CD8-positive, alpha-beta T cell (primary cell): ENCODE measurements at regions of chr16 and their contacts with region 1.

Region 1: GRCh38 chr16:89815639-89816348 is 653 bp downstream of the FANCA start:
- DNase-seq: peak in 1 of 9 experiments; percentile 19
- ATAC-seq: peak; percentile 12
- H3K4me3 ChIP-seq: peak overlapping the region in 1 of 2 experiments; percentile 34
- H3K4me3 Mint-ChIP-seq: peak overlapping the region; percentile 80
- H3K27ac ChIP-seq: no peak overlapping the region
- H3K27ac Mint-ChIP-seq: no peak overlapping the region
- H3K4me1 ChIP-seq: peaks cover 13% of the 10 kb centered on the region
- H3K4me1 Mint-ChIP-seq: peaks cover 10% of the 10 kb centered on the region
- H3K27me3 ChIP-seq: peaks cover 0 to 7% of the 10 kb centered on the region in 2 experiments
- H3K27me3 Mint-ChIP-seq: no peaks in the 10 kb centered on the region
- CTCF ChIP-seq: no peak

Region 2: DNA sequence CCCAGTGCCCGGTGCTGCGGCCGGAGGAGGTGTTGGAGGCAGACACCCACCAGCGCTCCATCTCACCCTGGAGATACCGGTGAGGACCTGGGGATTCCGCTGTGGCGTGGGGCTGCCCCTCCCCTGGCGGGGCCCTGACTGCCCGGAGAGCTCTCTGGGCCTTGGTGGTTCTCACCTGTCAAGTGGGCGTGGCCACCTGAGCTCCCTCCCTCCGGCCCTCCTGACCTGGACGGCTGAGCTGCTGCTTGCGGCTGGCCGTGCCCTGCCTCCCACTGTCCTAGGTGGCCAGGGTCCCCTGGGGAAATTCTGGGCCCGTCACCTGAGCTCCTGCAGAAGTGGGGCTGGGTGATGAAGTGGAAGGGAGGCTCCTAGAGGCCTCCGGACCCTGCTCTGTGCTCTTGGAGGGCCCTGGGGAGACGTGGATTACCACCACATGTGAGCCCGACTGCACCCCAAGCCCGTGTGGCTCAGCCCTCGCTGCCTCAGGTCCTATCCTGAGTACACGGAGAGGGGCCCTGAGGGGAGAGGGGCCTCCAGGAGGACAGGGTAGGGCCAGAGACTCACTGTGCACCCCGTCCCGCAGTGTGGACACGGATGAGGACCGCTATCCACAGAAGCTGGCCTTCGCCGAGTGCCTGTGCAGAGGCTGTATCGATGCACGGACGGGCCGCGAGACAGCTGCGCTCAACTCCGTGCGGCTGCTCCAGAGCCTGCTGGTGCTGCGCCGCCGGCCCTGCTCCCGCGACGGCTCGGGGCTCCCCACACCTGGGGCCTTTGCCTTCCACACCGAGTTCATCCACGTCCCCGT is 1176.4 kb before region 1 on chr16:
- CTCF ChIA-PET with region 1: no interaction called
- POLR2A ChIA-PET with region 1: no interaction called
- intact Hi-C with region 1: no loop called
- DNase-seq: peak in 2 of 9 experiments; percentile 44
- ATAC-seq: no peak
- H3K4me3 ChIP-seq: no peak overlapping the region
- H3K4me3 Mint-ChIP-seq: no peak overlapping the region
- H3K27ac ChIP-seq: no peak overlapping the region
- H3K27ac Mint-ChIP-seq: no peak overlapping the region
- H3K4me1 ChIP-seq: peaks cover 47% of the 10 kb centered on the region
- H3K4me1 Mint-ChIP-seq: peaks cover 41% of the 10 kb centered on the region
- H3K27me3 ChIP-seq: peaks cover 0 to 11% of the 10 kb centered on the region in 2 experiments
- H3K27me3 Mint-ChIP-seq: peaks cover 5% of the 10 kb centered on the region
- CTCF ChIP-seq: no peak

Region 3: DNA sequence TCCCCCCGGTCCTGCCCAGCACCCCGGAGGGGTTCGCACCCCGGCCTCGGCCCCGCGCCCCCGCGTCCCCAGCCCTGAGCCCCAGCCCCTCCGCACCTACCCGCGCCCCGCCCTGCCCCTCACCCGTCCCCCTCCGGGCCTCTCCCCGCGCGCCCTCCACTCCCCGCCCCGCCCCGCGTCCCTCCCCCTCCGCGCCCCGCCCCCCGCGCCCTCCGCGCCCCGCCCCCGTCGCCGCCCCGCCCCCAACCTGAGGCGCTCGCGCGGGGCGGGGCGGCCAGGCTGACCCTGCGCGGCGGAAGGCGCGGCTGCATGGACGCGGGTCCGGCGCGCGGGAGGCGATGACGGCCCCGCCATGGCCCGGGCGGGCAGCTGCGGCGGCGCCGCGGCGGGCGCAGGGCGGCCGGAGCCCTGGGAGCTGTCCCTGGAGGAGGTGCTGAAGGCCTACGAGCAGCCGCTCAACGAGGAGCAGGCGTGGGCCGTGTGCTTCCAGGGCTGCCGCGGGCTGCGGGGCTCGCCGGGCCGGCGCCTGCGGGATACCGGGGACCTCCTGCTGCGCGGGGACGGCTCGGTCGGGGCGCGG is 12.5 kb after region 1 on chr16 and contains the start of gene SPIRE2:
- CTCF ChIA-PET with region 1: no interaction called
- POLR2A ChIA-PET with region 1: no interaction called
- intact Hi-C with region 1: loop called (anchors 1 kb)
- DNase-seq: peak; percentile 48 to 88 (median 72)
- ATAC-seq: peak; percentile 97
- H3K4me3 ChIP-seq: no peak within 1 kb of the TSS
- H3K4me3 Mint-ChIP-seq: peak within 1 kb of the TSS; percentile 61
- H3K27ac ChIP-seq: no peak within 1 kb of the TSS
- H3K27ac Mint-ChIP-seq: no peak within 1 kb of the TSS
- H3K4me1 ChIP-seq: peaks cover 11% of the 10 kb centered on the region
- H3K4me1 Mint-ChIP-seq: peaks cover 8% of the 10 kb centered on the region
- H3K27me3 ChIP-seq: peaks cover 4 to 14% of the 10 kb centered on the region in 2 experiments
- H3K27me3 Mint-ChIP-seq: peaks cover 23% of the 10 kb centered on the region
- CTCF ChIP-seq: no peak
- total RNA-seq, gene SPIRE2: 0.76 TPM in 1 of 2 experiments, not detected in the other

Region 4: DNA sequence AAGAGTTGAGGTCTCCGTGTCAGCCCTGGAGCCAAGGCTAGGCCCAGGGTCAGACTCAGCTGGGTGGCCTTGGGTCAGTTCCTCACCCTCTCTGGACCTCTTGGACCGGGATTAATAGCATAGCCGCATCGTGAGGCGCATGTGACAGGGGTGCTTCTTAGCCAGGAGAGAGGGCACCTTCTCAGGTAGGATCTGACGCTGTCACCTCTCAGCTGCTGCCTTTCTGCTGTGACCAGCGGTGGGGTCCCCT is 21.4 kb after region 1 on chr16:
- CTCF ChIA-PET with region 1: no interaction called
- POLR2A ChIA-PET with region 1: interaction called, 4 read pairs
- intact Hi-C with region 1: loop called in 1 of 2 experiments (anchors 2 kb)
- DNase-seq: no peak
- ATAC-seq: no peak
- H3K4me3 ChIP-seq: peak overlapping the region; percentile 21 to 28
- H3K4me3 Mint-ChIP-seq: peak overlapping the region; percentile 68
- H3K27ac ChIP-seq: no peak overlapping the region
- H3K27ac Mint-ChIP-seq: no peak overlapping the region
- H3K4me1 ChIP-seq: peaks cover 30% of the 10 kb centered on the region
- H3K4me1 Mint-ChIP-seq: peaks cover 26% of the 10 kb centered on the region
- H3K27me3 ChIP-seq: no peaks in the 10 kb centered on the region
- H3K27me3 Mint-ChIP-seq: peaks cover 4% of the 10 kb centered on the region
- CTCF ChIP-seq: no peak

Region 5: DNA sequence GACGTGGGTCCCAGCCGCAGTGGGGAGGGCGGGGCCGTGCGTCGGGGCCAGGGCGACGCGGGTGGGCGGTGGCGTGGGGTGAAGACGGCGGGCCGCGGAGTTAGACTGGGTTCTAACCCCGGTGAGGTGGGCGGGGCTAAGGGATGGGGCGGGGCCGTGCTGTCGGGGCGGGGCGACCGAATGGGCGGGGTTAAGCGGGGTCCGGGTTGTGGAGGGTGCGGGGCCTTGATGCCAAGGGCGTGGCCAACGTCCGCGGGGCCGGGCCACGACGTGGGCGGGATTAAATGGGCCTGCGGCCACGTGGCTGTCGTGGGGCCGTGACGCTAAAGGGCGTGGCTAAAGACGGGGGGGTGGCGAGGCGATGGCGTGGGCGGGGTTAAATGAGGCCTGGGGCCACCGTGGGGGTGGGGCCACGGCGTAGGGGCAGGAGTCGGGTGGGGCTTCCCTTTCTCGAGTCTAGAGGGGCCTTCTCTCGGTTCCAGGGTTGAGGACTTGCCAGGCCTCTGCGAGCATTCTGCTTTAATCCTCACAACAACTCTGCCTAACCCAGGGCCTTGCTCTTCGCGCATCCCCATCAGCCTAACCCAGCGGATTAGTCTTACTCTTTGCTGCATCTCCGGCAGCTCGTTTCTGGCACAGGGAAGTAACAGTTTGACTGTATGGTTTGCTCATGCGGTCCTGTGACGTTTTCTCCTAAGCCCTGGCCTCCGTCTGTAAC is 58.3 kb after region 1 on chr16:
- CTCF ChIA-PET with region 1: no interaction called
- POLR2A ChIA-PET with region 1: interaction called, 6 read pairs
- intact Hi-C with region 1: loop called in 1 of 2 experiments (anchors 1 kb)
- DNase-seq: peak; percentile 86 to 99 (median 96)
- ATAC-seq: peak; percentile 77
- H3K4me3 ChIP-seq: peak overlapping the region; percentile 98
- H3K4me3 Mint-ChIP-seq: peak overlapping the region; percentile 90
- H3K27ac ChIP-seq: peak overlapping the region; percentile 100
- H3K27ac Mint-ChIP-seq: peak overlapping the region; percentile 99
- H3K4me1 ChIP-seq: peaks cover 23% of the 10 kb centered on the region
- H3K4me1 Mint-ChIP-seq: peaks cover 19% of the 10 kb centered on the region
- H3K27me3 ChIP-seq: no peaks in the 10 kb centered on the region
- H3K27me3 Mint-ChIP-seq: no peaks in the 10 kb centered on the region
- CTCF ChIP-seq: no peak

Region 6: DNA sequence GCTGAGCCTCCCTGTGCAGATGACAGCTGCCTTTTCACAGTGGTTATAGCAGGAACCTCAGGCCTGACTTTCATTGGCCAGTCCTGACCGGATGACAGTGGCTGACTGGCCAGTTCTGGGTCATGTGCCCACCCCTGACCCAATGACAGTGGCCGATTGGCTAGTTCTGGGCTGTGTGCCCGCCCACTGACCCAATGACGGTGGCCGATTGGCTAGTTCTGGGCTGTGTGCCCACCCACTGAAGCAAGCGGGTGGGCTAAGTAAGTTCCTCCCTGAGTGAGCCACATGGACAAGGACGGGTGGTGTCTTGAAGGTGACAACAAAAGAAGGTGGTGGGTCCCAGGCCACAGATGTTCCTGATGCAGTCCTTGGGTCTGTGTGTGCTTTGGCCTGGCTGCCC is 142.3 kb after region 1 on chr16:
- CTCF ChIA-PET with region 1: no interaction called
- POLR2A ChIA-PET with region 1: no interaction called
- intact Hi-C with region 1: no loop called
- DNase-seq: peak in 1 of 9 experiments; percentile 18
- ATAC-seq: peak; percentile 42
- H3K4me3 ChIP-seq: no peak overlapping the region
- H3K4me3 Mint-ChIP-seq: no peak overlapping the region
- H3K27ac ChIP-seq: no peak overlapping the region
- H3K27ac Mint-ChIP-seq: no peak overlapping the region
- H3K4me1 ChIP-seq: no peaks in the 10 kb centered on the region
- H3K4me1 Mint-ChIP-seq: no peaks in the 10 kb centered on the region
- H3K27me3 ChIP-seq: no peaks in the 10 kb centered on the region
- H3K27me3 Mint-ChIP-seq: no peaks in the 10 kb centered on the region
- CTCF ChIP-seq: no peak